Activated CD8-positive, alpha-beta memory T cell treated with anti-CD3 and anti-CD28 coated beads, Interleukin-2, amount 10 ng/mL, durations not matched to agents 7 days and 5 days (primary cell): ENCODE measurements at regions of chr22 and their contacts with region 1.

Region 1: DNA sequence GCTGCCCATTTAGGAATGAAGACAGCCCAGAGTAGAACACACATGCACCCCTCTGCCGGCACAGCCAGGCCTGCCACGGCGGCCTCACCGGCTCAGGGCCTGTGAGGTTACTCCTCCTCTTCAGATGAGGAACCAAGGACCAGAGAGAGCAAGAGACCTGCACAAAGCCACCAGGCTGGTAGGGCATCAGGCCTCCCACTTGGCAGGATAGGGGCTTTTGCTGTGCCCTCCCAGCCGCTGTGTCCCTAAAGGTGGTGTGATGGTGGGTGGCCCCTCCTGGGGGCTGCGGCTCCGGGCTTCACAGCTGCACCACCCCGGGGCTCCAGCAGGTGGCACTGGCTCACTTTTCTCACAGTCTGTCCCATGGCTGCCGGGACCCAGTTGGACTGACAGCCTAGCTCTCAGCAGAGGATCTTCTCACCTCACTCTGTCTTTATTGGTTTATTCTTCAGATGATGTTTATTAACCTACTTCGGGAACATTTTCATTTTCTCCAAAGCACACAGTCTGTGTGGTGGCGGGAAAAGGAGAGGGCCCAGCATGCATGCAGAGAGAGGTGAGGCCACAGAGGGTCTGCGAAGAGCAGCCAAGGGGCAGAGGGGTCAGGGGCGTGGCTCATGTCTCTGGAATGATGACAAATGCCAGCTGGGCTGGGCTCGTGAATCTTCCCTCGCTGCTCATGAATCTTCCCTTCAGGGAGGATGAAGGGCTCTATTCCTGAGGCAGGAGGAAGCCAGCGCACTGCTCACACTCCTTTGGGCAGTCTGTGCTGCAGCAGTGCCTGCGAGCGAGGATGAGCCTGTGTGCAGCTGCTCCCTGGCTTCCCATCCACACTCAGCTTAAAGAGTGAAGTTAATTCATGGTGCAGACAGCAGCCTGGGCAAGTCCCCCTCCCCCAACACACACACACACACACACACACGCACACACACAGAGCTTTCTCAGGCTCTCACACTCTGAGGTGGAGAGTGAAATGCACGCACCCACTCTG is 101.1 kb upstream of the PITPNB start:
- DNase-seq: peak; percentile 66
- ATAC-seq: peak; percentile 76
- H3K4me3 Mint-ChIP-seq: no peak overlapping the region
- H3K27ac Mint-ChIP-seq: no peak overlapping the region
- H3K4me1 Mint-ChIP-seq: peaks cover 13% of the 10 kb centered on the region
- H3K27me3 Mint-ChIP-seq: no peaks in the 10 kb centered on the region

Region 2: GRCh38 chr22:28442264-28442710 is 422.1 kb after region 1 on chr22:
- CTCF ChIA-PET with region 1: interaction called, 12 read pairs
- DNase-seq: peak; percentile 82
- ATAC-seq: peak; percentile 98
- H3K4me3 Mint-ChIP-seq: peak overlapping the region; percentile 55
- H3K27ac Mint-ChIP-seq: no peak overlapping the region
- H3K4me1 Mint-ChIP-seq: peaks cover 10% of the 10 kb centered on the region
- H3K27me3 Mint-ChIP-seq: peaks cover 59% of the 10 kb centered on the region